Mammary epithelial cell (primary cell): ENCODE measurements at regions of chr18 and their contacts with region 1.

Region 1: DNA sequence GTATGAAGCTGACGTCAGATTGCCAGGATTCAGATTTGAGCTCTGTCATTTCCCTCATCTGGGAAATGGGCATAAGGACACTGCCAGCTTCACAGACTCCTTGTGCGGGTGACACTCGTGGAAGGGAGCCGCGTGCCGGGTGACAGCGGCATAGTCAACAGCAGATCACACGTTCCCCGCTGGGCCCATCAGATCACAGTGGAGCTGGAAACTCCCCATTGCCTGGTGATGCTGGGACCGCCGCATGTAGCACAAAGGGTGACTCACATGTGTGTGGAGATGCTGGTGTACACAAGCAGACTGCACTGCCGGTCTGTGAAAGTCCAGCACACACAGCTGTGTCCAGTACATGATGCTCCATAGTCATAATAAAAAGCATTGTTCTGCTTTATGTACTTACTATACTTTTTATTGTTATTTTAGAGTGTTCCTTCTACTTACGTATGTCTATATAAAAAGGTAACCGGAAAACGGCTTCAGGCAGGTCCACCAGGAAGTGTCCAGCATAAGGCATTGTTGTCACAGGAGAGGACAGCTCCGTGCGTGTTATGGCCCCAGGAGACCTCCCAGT is 31.8 kb downstream of the SALL3 start:
- DNase-seq: no peak
- H3K4me3 ChIP-seq: no peak overlapping the region
- H3K27ac ChIP-seq: no peak overlapping the region
- H3K4me1 ChIP-seq: no peaks in the 10 kb centered on the region
- H3K27me3 ChIP-seq: peaks cover 2% of the 10 kb centered on the region
- CTCF ChIP-seq: no peak

Region 2: GRCh38 chr18:78939734-78940494 is 71.5 kb before region 1 on chr18:
- CTCF ChIA-PET with region 1: no interaction called
- dilution Hi-C with region 1: loop called (anchors 5 kb)
- in situ Hi-C with region 1: no loop called
- intact Hi-C with region 1: no loop called
- DNase-seq: no peak
- H3K4me3 ChIP-seq: no peak overlapping the region
- H3K27ac ChIP-seq: no peak overlapping the region
- H3K4me1 ChIP-seq: no peaks in the 10 kb centered on the region
- H3K27me3 ChIP-seq: no peaks in the 10 kb centered on the region
- CTCF ChIP-seq: no peak